HEK293 (cell line): ENCODE measurements at regions of chr9 and their contacts with region 1.

Region 1: DNA sequence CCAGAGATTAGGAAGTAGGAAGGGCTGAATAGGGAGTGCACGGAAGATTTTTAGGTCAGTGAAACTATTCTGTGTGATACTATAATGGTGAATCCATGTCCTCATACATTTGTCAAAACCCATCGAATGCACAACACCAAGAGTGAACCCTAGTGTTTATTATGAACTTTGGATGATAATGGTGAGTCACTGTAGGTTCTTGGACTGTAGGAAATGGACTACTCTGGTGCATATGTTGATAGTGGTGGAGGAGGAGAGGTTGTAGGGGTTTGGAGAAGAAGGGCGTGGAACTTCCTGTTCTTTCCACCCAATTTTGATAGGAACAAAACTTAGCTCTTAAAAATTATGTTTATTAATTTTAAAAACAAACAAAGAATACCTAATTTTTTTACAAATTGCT is 14.3 kb downstream of the CTSL start:
- H3K4me3 ChIP-seq: no peak overlapping the region
- H3K27ac ChIP-seq: no peak overlapping the region
- H3K4me1 ChIP-seq: no peaks in the 10 kb centered on the region
- CTCF ChIP-seq: no peak

Region 2: DNA sequence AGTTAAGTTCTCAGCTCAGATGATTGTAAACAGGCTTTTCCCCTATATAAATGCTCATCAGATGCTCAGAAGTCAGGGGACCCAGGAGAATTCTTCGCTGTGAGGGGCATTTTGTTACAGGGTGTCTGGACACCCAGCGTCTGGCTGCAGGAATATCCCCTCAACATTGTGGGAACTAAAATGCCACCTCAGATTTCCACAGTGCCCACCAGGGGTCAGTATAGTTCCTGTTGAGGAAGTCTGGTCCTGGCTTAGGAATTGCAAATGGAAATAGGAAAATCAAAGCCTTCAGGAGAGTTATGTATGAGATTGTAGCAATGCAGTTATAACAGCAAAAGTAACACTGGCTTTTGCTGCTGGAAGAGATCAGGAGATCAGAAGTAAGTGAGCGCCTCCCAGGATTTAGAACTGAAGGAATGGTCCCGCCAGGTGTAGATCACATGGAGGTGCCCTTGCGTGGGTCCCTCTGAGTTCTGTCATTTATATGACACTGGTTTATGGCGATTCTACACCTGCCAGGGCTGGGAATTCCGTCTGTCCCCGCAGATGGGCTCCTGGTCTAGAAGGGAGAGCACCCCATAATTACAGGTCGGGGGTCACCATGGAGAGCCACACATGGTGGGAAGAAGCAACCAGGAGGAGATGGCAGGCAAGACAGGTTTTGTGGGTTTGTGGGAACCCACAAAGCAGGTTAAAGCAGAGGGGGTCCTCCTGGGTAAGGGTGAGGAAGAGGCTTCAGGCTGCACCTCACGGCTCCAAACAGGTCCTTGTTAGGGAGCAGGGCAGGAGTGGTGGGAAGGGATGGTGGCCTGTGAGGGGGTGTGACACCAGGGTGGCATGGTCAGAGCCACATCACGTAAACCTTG is 61.3 kb before region 1 on chr9:
- CTCF ChIA-PET with region 1: interaction called, 12 read pairs
- POLR2A ChIA-PET with region 1: no interaction called
- H3K4me3 ChIP-seq: no peak overlapping the region
- H3K27ac ChIP-seq: no peak overlapping the region
- H3K4me1 ChIP-seq: no peaks in the 10 kb centered on the region
- CTCF ChIP-seq: 0 out of 2 replicates have a peak, but pooled peaks have one; percentile 27

Region 3: GRCh38 chr9:87751869-87752268 is 11.7 kb after region 1 on chr9:
- CTCF ChIA-PET with region 1: no interaction called
- POLR2A ChIA-PET with region 1: no interaction called
- H3K4me3 ChIP-seq: no peak overlapping the region
- H3K27ac ChIP-seq: no peak overlapping the region
- H3K4me1 ChIP-seq: no peaks in the 10 kb centered on the region
- CTCF ChIP-seq: no peak

Region 4: DNA sequence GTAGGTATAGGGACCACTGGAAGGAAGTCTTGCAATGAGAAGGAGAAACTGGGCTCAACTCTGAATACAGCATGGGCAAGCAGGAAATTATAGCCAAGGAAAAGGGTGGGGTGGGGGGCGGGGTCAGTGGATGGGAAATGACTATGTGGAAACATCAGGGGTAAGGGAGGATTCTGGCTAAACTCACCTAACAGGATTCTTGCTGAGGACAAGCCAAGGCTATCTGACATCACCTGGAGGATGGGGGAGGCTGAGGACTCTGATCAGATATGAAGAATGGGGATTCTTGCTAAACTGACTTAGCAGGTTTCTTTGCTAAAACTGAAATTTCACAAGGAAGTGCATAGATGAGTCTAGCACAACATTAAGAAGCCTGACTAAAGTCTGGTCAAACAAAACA is 26.5 kb after region 1 on chr9:
- CTCF ChIA-PET with region 1: no interaction called
- POLR2A ChIA-PET with region 1: no interaction called
- H3K4me3 ChIP-seq: no peak overlapping the region
- H3K27ac ChIP-seq: no peak overlapping the region
- H3K4me1 ChIP-seq: no peaks in the 10 kb centered on the region
- CTCF ChIP-seq: no peak